ENCODE measurements at regions of chr2 and their contacts with region 1.

Region 1: GRCh38 chr2:196489371-196489770 is 150.1 kb upstream of the CCDC150 start:
- DNase-seq: no peak
- H3K4me3 ChIP-seq: no peak overlapping the region
- H3K27ac ChIP-seq: no peak overlapping the region
- H3K4me1 ChIP-seq: no peaks in the 10 kb centered on the region
- H3K27me3 ChIP-seq: no peaks in the 10 kb centered on the region
- CTCF ChIP-seq: no peak
- EP300 ChIP-seq: no peak
- POLR2A ChIP-seq: no peak

Region 2: DNA sequence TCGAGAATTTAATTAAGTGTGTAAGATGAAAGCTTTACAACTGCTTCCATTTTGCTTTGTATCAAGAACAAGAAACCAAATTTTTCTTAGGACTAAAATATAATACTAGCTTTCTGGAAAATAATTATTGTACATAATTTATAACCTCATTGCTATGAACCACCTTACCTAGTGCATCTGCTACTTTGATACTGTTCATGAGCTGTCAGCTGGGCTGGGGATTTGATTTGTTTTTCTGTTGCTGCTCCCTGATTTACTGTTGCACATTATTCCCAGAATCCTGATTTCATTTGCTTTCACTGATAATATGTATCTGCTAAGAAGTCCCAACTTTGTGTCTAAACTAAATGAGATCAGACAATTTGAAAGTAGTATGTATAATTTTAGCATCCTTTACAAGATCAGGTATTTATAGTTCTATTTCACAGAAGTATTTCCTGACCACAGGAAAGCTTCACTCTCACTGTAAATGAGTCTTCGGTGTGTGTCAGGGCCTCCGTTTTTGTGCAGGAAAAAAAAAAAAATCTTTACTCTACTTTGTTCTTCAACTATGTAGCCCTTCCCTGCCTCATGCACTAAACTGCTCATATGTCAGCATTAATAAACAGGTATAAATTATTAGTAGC is 44.5 kb after region 1 on chr2:
- intact Hi-C with region 1: loop called in 1 of 4 experiments (anchors 2 kb)
- DNase-seq: no peak
- H3K4me3 ChIP-seq: no peak overlapping the region
- H3K27ac ChIP-seq: no peak overlapping the region
- H3K4me1 ChIP-seq: no peaks in the 10 kb centered on the region
- H3K27me3 ChIP-seq: no peaks in the 10 kb centered on the region
- CTCF ChIP-seq: no peak
- EP300 ChIP-seq: no peak
- POLR2A ChIP-seq: no peak

Region 3: DNA sequence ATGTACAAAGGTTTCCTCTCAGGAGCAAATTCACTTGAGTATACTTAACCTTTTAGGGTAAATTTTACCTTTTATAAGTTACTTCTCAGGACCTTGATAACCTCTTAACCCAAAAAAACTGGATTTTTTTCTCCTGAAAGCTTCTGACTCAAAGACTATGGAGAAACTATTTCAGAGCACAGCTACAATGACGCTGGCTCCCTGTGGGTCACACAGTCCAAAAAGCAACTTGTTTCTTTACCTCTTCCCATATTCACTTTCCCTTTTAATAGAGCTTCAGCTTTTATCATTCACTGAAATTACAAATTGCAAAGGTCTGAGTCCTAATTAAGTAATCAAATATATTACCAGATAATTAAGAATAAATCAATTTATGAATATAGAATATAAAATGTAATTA is 277.7 kb after region 1 on chr2:
- intact Hi-C with region 1: no loop called
- DNase-seq: no peak
- H3K4me3 ChIP-seq: no peak overlapping the region
- H3K27ac ChIP-seq: no peak overlapping the region
- H3K4me1 ChIP-seq: no peaks in the 10 kb centered on the region
- H3K27me3 ChIP-seq: no peaks in the 10 kb centered on the region
- CTCF ChIP-seq: no peak
- EP300 ChIP-seq: no peak
- POLR2A ChIP-seq: no peak

Measured in ovary (tissue), 10 donors.